ENCODE measurements at regions of chr6 and their contacts with region 1.

Region 1: GRCh38 chr6:156953479-156954146 is 176.4 kb downstream of the ARID1B start:
- DNase-seq: peak; percentile 41
- H3K4me3 Mint-ChIP-seq: no peak overlapping the region
- H3K27ac Mint-ChIP-seq: no peak overlapping the region
- H3K4me1 Mint-ChIP-seq: peaks cover 62% of the 10 kb centered on the region
- H3K27me3 Mint-ChIP-seq: no peaks in the 10 kb centered on the region

Region 2: GRCh38 chr6:156564127-156564806 is 389.3 kb before region 1 on chr6:
- CTCF ChIA-PET with region 1: no interaction called
- POLR2A ChIA-PET with region 1: no interaction called
- intact Hi-C with region 1: loop called (anchors 5 kb)
- DNase-seq: peak; percentile 87
- H3K4me3 Mint-ChIP-seq: no peak overlapping the region
- H3K27ac Mint-ChIP-seq: peak overlapping the region; percentile 13
- H3K4me1 Mint-ChIP-seq: no peaks in the 10 kb centered on the region
- H3K27me3 Mint-ChIP-seq: peaks cover 19% of the 10 kb centered on the region

Region 3: GRCh38 chr6:156699017-156699421 is 254.6 kb before region 1 on chr6:
- CTCF ChIA-PET with region 1: no interaction called
- POLR2A ChIA-PET with region 1: no interaction called
- intact Hi-C with region 1: loop called (anchors 10 kb)
- DNase-seq: peak; percentile 38
- H3K4me3 Mint-ChIP-seq: no peak overlapping the region
- H3K27ac Mint-ChIP-seq: no peak overlapping the region
- H3K4me1 Mint-ChIP-seq: peaks cover 24% of the 10 kb centered on the region
- H3K27me3 Mint-ChIP-seq: peaks cover 3% of the 10 kb centered on the region

Region 4: GRCh38 chr6:156848533-156848932 is 105.1 kb before region 1 on chr6:
- CTCF ChIA-PET with region 1: no interaction called
- POLR2A ChIA-PET with region 1: no interaction called
- intact Hi-C with region 1: no loop called
- DNase-seq: no peak
- H3K4me3 Mint-ChIP-seq: no peak overlapping the region
- H3K27ac Mint-ChIP-seq: no peak overlapping the region
- H3K4me1 Mint-ChIP-seq: peaks cover 88% of the 10 kb centered on the region
- H3K27me3 Mint-ChIP-seq: no peaks in the 10 kb centered on the region

Region 5: DNA sequence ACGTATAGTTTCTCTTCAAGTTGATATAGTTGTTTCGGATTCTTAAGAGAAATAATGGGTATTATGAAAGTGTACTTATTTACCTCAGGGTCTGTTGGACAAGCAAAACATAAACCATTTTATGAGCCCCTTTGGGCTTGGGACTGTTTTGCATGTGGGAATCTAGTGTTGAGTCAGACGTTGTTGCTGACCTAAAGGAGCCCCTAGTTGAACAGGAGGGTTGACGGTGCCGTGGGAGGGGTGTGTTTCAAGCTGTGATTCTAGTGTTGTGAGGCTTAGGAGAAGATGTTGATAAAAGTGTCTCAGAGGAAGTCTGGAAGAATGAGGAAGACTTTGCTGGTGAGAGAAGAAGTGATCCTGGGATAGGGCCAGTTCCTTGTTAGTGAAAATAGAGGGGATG is 36.4 kb before region 1 on chr6:
- CTCF ChIA-PET with region 1: no interaction called
- POLR2A ChIA-PET with region 1: no interaction called
- intact Hi-C with region 1: no loop called
- DNase-seq: no peak
- H3K4me3 Mint-ChIP-seq: no peak overlapping the region
- H3K27ac Mint-ChIP-seq: no peak overlapping the region
- H3K4me1 Mint-ChIP-seq: peaks cover 49% of the 10 kb centered on the region
- H3K27me3 Mint-ChIP-seq: no peaks in the 10 kb centered on the region

Region 6: GRCh38 chr6:156933201-156934068 is 20.2 kb before region 1 on chr6:
- CTCF ChIA-PET with region 1: interaction called, 3 read pairs
- POLR2A ChIA-PET with region 1: no interaction called
- intact Hi-C with region 1: loop called (anchors 1 kb)
- DNase-seq: no peak
- H3K4me3 Mint-ChIP-seq: no peak overlapping the region
- H3K27ac Mint-ChIP-seq: no peak overlapping the region
- H3K4me1 Mint-ChIP-seq: peaks cover 60% of the 10 kb centered on the region
- H3K27me3 Mint-ChIP-seq: no peaks in the 10 kb centered on the region

Region 7: GRCh38 chr6:156976216-156977127 is 22.9 kb after region 1 on chr6:
- CTCF ChIA-PET with region 1: no interaction called
- POLR2A ChIA-PET with region 1: interaction called, 4 read pairs
- intact Hi-C with region 1: loop called (anchors 1 kb)
- DNase-seq: peak; percentile 48
- H3K4me3 Mint-ChIP-seq: peak overlapping the region; percentile 73
- H3K27ac Mint-ChIP-seq: peak overlapping the region; percentile 77
- H3K4me1 Mint-ChIP-seq: peaks cover 74% of the 10 kb centered on the region
- H3K27me3 Mint-ChIP-seq: no peaks in the 10 kb centered on the region

Region 8: GRCh38 chr6:157488716-157489118 is 535.1 kb after region 1 on chr6:
- CTCF ChIA-PET with region 1: no interaction called
- POLR2A ChIA-PET with region 1: no interaction called
- intact Hi-C with region 1: no loop called
- DNase-seq: no peak
- H3K4me3 Mint-ChIP-seq: no peak overlapping the region
- H3K27ac Mint-ChIP-seq: no peak overlapping the region
- H3K4me1 Mint-ChIP-seq: peaks cover 12% of the 10 kb centered on the region
- H3K27me3 Mint-ChIP-seq: peaks cover 6% of the 10 kb centered on the region

Measured in activated CD4-positive, alpha-beta memory T cell treated with anti-CD3 and anti-CD28 coated beads for 36 hours (primary cell).